PC-3 (cell line): ENCODE measurements at regions of chr12 and their contacts with region 1.

Region 1: GRCh38 chr12:113221181-113221997 is at the start of gene TPCN1:
- DNase-seq: peak; percentile 100
- ATAC-seq: peak; percentile 90
- H3K4me3 ChIP-seq: peak within 1 kb of the TSS; percentile 79
- H3K27ac ChIP-seq: peak within 1 kb of the TSS; percentile 82
- H3K4me1 ChIP-seq: peaks cover 27% of the 10 kb centered on the region
- H3K27me3 ChIP-seq: no peaks in the 10 kb centered on the region
- CTCF ChIP-seq: no peak
- total RNA-seq, gene TPCN1: 19.0 and 29.3 TPM in 2 replicates

Region 2: GRCh38 chr12:113208041-113208934 is 13.1 kb before region 1 on chr12:
- CTCF ChIA-PET with region 1: interaction called, 4 read pairs
- POLR2A ChIA-PET with region 1: interaction called, 10 read pairs
- intact Hi-C with region 1: no loop called
- DNase-seq: no peak
- ATAC-seq: no peak
- H3K4me3 ChIP-seq: no peak overlapping the region
- H3K27ac ChIP-seq: no peak overlapping the region
- H3K4me1 ChIP-seq: no peaks in the 10 kb centered on the region
- H3K27me3 ChIP-seq: no peaks in the 10 kb centered on the region
- CTCF ChIP-seq: no peak

Region 3: GRCh38 chr12:113241191-113242025 is 20.0 kb after region 1 on chr12:
- CTCF ChIA-PET with region 1: no interaction called
- POLR2A ChIA-PET with region 1: interaction called, 24 read pairs
- intact Hi-C with region 1: loop called (anchors 1 kb)
- DNase-seq: peak; percentile 97
- ATAC-seq: peak; percentile 61
- H3K4me3 ChIP-seq: peak overlapping the region; percentile 37; the same call in 1 of the 2 replicates
- H3K27ac ChIP-seq: peak overlapping the region; percentile 96
- H3K4me1 ChIP-seq: peaks cover 64% of the 10 kb centered on the region
- H3K27me3 ChIP-seq: no peaks in the 10 kb centered on the region
- CTCF ChIP-seq: no peak

Region 4: GRCh38 chr12:113247123-113248055 is 26.0 kb after region 1 on chr12:
- CTCF ChIA-PET with region 1: no interaction called
- POLR2A ChIA-PET with region 1: interaction called, 24 read pairs
- intact Hi-C with region 1: no loop called
- DNase-seq: peak; percentile 48
- ATAC-seq: no peak
- H3K4me3 ChIP-seq: peak overlapping the region; percentile 49
- H3K27ac ChIP-seq: peak overlapping the region; percentile 99
- H3K4me1 ChIP-seq: peaks cover 47% of the 10 kb centered on the region
- H3K27me3 ChIP-seq: no peaks in the 10 kb centered on the region
- CTCF ChIP-seq: no peak

Region 5: DNA sequence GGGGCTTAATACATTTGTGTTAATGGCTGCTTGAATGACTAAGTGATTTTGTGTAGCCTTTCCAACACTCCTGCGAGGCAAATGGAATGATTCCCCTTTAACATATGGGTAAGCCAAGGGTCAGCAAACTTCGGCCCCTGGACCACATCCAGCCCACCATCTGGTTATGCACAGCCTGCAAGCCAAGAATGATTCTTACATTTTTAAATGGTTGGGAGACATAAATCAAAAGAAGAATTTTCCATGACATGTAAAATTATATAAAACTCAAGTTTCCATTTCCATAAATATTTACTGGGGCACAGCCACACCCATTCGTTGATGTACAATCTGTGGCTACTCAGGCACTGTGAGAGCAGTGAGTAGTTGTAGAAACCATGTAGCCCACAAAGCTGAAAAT is 104.5 kb after region 1 on chr12:
- CTCF ChIA-PET with region 1: no interaction called
- POLR2A ChIA-PET with region 1: no interaction called
- intact Hi-C with region 1: no loop called
- DNase-seq: no peak
- ATAC-seq: no peak
- H3K4me3 ChIP-seq: no peak overlapping the region
- H3K27ac ChIP-seq: no peak overlapping the region
- H3K4me1 ChIP-seq: 0 out of 2 replicates have a peak, but pooled peaks cover 4% of the 10 kb centered on the region
- H3K27me3 ChIP-seq: no peaks in the 10 kb centered on the region
- CTCF ChIP-seq: no peak